IMR-90 (cell line): ENCODE measurements at regions of chr9 and their contacts with region 1.

Region 1: DNA sequence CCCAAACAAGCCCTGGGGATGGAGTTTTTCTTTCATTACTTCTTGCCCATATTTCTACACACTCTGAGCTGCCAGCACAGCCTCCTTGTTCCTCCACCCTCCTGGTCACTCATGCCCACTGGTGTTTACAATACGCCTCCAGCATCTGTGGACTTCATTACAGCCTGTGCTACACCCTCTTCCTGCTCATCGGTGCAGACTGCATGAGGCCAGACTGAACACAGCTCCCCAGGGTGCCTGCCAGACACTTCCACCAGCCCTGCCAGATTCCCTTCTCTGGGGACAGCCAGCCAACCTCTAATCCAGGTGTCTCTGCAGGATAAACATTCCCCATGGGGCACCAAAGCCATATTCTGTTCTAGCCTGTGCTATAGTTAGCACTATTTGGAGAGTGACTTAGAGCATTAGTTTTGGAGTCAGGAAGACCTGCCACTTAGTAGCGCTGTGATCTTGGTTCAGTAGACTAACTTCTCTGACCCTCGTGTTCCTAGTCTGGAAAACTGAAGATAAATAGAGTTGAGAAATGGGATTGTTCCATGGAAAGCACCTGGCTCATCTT is 163.8 kb upstream of the KLF4 start:
- DNase-seq: no peak
- ATAC-seq: peak; percentile 59
- H3K4me3 ChIP-seq: no peak overlapping the region
- H3K27ac ChIP-seq: no peak overlapping the region
- H3K4me1 ChIP-seq: peaks cover 3% of the 10 kb centered on the region; the same call in 1 of the 2 replicates
- H3K27me3 ChIP-seq: peaks cover 6% of the 10 kb centered on the region
- CTCF ChIP-seq: no peak
- POLR2A ChIP-seq: no peak
- RAD21 ChIP-seq: no peak

Region 2: DNA sequence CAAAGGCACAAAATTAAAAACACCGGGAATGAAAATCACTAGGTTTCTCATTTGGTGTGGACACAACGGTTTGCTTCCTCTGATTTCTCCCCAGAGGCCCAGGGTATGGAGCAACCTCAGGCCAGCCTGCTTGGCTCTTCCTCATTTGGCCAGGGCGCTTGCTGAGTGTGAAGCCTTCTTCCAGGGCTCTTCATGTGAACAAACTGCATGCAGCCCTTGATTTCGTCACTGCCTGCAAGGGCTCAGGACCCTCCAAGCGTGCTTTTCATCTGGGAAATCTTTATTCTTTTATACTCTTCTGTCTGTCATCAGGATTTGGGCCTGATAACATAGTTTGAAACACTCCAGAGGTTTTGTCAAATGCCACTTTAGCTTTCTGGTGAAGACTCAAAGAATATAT is 41.2 kb before region 1 on chr9:
- CTCF ChIA-PET with region 1: no interaction called
- POLR2A ChIA-PET with region 1: interaction called, 12 read pairs
- dilution Hi-C with region 1: no loop called
- in situ Hi-C with region 1: no loop called
- intact Hi-C with region 1: no loop called
- DNase-seq: no peak
- ATAC-seq: no peak
- H3K4me3 ChIP-seq: no peak overlapping the region
- H3K27ac ChIP-seq: no peak overlapping the region
- H3K4me1 ChIP-seq: peaks cover 5% of the 10 kb centered on the region; the same call in 1 of the 2 replicates
- H3K27me3 ChIP-seq: peaks cover 11% of the 10 kb centered on the region
- CTCF ChIP-seq: no peak
- POLR2A ChIP-seq: no peak
- RAD21 ChIP-seq: no peak

Region 3: DNA sequence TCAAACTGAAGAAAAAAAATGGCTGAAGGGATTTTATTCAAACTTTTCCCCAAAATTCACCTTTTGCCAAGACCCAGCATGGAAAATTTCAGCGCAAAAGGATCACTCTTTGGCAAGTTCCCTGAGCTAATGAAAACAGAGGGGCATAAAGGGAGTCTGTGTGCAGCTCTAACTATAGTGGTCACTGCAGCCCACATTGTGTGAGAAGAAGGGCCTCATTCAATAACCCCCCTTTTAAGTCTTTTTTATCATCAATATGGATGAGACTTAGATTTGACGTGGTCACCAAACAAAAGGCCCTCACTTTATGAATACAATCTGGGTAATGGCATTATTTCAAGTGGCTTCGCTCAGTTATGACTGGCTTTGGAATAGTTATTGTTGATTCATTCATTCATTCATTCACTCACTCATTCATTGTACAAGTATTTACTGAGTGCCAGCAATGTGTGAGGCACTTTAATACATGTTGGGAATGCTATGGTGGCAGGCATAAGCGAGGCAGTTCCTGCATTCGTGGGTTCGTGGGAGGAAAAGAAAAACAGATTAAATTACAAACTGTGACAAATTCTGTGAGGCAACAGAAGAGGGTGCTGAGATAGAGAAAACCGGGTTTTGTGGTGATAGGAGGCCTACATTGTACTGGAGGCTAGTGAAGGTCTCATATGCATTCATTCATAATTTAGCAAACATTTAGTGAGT is 18.1 kb before region 1 on chr9:
- CTCF ChIA-PET with region 1: no interaction called
- POLR2A ChIA-PET with region 1: no interaction called
- dilution Hi-C with region 1: no loop called
- in situ Hi-C with region 1: no loop called
- intact Hi-C with region 1: no loop called
- DNase-seq: peak; percentile 43
- ATAC-seq: no peak
- H3K4me3 ChIP-seq: no peak overlapping the region
- H3K27ac ChIP-seq: no peak overlapping the region
- H3K4me1 ChIP-seq: peaks cover 10% of the 10 kb centered on the region
- H3K27me3 ChIP-seq: no peaks in the 10 kb centered on the region
- CTCF ChIP-seq: no peak
- POLR2A ChIP-seq: no peak
- RAD21 ChIP-seq: no peak

Region 4: GRCh38 chr9:107674721-107675277 is 21.5 kb after region 1 on chr9:
- CTCF ChIA-PET with region 1: no interaction called
- POLR2A ChIA-PET with region 1: interaction called, 10 read pairs
- dilution Hi-C with region 1: no loop called
- in situ Hi-C with region 1: no loop called
- intact Hi-C with region 1: no loop called
- DNase-seq: no peak
- ATAC-seq: no peak
- H3K4me3 ChIP-seq: no peak overlapping the region
- H3K27ac ChIP-seq: no peak overlapping the region
- H3K4me1 ChIP-seq: no peaks in the 10 kb centered on the region; the same call in 1 of the 2 replicates
- H3K27me3 ChIP-seq: peaks cover 2% of the 10 kb centered on the region; the same call in 1 of the 2 replicates
- CTCF ChIP-seq: no peak
- POLR2A ChIP-seq: no peak
- RAD21 ChIP-seq: no peak

Region 5: DNA sequence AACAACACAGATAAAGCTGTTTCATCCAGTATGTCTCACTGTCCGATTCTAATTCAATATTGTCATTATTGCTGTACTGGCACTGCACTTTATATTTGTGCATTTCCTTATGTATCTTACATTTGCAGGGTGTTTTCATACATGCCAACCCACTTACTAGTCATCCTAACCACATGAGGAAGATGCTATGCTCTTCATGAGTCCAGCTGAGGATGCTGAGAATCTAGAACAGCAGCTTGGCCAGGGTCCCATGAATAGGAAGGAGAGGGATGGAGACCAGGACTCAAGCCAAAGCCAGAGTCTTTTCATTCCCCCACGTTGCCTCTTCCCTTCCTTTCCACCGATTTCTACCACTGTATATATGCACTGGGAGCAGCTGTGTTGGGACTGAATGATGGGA is 129.0 kb after region 1 on chr9:
- CTCF ChIA-PET with region 1: no interaction called
- POLR2A ChIA-PET with region 1: no interaction called
- dilution Hi-C with region 1: no loop called
- in situ Hi-C with region 1: no loop called
- intact Hi-C with region 1: no loop called
- DNase-seq: peak; percentile 74
- ATAC-seq: no peak; the same call in 1 of the 2 replicates
- H3K4me3 ChIP-seq: no peak overlapping the region
- H3K27ac ChIP-seq: no peak overlapping the region
- H3K4me1 ChIP-seq: peaks cover 8% of the 10 kb centered on the region
- H3K27me3 ChIP-seq: no peaks in the 10 kb centered on the region
- CTCF ChIP-seq: no peak
- POLR2A ChIP-seq: no peak
- RAD21 ChIP-seq: no peak